HCT116 (cell line): ENCODE measurements at regions of chr15 and their contacts with region 1.

Region 1: DNA sequence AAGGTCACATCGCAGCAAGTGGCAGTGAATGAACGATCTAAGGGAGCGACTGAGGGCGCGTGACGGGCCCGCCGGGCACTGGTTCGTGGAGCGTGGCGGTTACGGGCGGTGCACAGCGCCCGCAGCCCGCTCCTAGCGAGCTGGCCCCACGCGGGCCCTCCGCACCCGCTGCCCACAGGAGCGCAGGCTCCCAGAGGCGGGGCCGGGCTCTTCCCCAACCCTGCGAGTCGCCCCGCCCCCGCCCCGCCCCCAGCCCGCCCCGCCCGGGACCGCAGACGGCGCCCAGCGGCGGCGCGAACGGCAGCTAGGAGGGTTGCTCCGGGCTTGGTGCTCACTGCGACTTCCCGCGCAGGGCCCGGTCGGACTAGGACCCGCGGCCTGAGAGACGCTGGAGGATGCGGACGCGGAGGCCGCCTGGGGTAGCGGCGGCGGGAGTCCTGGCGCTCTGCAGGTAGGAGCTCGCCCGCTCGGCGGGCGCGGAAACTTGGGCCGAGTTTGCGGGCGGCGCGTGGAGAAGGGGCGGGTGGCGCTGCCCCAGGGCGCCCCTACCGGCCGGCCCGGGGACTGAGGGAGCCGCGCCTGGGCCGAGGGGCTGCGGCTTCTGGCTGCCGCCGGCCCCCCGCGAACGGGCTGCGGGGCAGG is at the start of gene C15orf39:
- DNase-seq: peak; percentile 33
- ATAC-seq: peak; percentile 69
- H3K4me3 ChIP-seq: peak within 1 kb of the TSS; percentile 88
- H3K27ac ChIP-seq: peak within 1 kb of the TSS; percentile 95
- H3K4me1 ChIP-seq: peaks cover 32 to 56% of the 10 kb centered on the region in 2 experiments
- H3K27me3 ChIP-seq: no peaks in the 10 kb centered on the region
- CTCF ChIP-seq: peak in 2 of 3 experiments; percentile 70 to 73; a peak in 4 of 6 replicates
- POLR2A ChIP-seq: peak; percentile 93
- RAD21 ChIP-seq: no peak
- total RNA-seq, gene C15orf39: 29.3 TPM

Region 2: GRCh38 chr15:74565381-74566085 is 636.2 kb before region 1 on chr15:
- CTCF ChIA-PET with region 1: no interaction called
- POLR2A ChIA-PET with region 1: no interaction called
- RAD21 ChIA-PET with region 1: no interaction called
- intact Hi-C with region 1: no loop called
- DNase-seq: no peak
- ATAC-seq: no peak
- H3K4me3 ChIP-seq: no peak overlapping the region
- H3K27ac ChIP-seq: no peak overlapping the region
- H3K4me1 ChIP-seq: no peaks in the 10 kb centered on the region
- H3K27me3 ChIP-seq: no peaks in the 10 kb centered on the region
- CTCF ChIP-seq: no peak
- POLR2A ChIP-seq: no peak
- RAD21 ChIP-seq: no peak

Region 3: GRCh38 chr15:74787251-74788041 is 414.3 kb before region 1 on chr15:
- CTCF ChIA-PET with region 1: no interaction called
- POLR2A ChIA-PET with region 1: no interaction called
- RAD21 ChIA-PET with region 1: no interaction called
- intact Hi-C with region 1: loop called (anchors 10 kb)
- DNase-seq: no peak
- ATAC-seq: peak; percentile 69
- H3K4me3 ChIP-seq: no peak overlapping the region
- H3K27ac ChIP-seq: no peak overlapping the region; the same call in 1 of the 2 replicates
- H3K4me1 ChIP-seq: peaks cover 20 to 42% of the 10 kb centered on the region in 2 experiments
- H3K27me3 ChIP-seq: no peaks in the 10 kb centered on the region
- CTCF ChIP-seq: peak in 2 of 3 experiments; percentile 50 to 52; a peak in 4 of 6 replicates
- POLR2A ChIP-seq: no peak
- RAD21 ChIP-seq: no peak

Region 4: DNA sequence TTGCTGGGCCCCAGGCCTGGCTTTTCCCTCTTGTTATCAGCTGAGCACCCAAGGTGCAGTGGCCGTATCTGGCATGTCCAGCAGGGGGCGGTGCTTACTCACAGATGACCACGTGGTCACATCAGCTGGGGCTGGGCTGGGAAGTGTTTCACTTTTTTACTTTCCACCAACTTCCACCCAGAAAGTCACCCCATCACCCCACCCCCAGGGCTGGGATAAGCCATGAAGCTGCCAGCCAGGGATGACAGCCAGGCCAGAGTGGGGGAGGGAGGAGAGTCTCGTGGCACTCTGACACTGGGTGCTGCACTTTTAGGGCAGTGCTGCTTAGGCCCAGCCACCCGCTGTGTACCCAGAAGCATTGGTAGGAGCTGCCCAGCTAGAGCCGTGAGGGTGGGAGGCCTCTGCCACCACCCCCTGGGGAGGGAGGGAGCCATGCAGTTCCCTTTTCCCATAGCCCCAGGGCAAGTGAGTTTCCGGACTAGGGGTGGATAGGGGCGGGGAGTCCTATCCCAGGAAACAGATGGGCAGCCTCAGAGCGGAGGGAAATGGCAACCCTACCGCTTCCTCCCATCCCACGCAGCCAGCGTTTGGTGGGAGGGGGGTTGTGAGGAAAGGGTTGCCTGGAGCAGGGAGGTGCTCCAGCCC is 172.2 kb before region 1 on chr15:
- CTCF ChIA-PET with region 1: interaction called, 33 read pairs
- POLR2A ChIA-PET with region 1: interaction called, 8 read pairs
- RAD21 ChIA-PET with region 1: interaction called, 7 to 10 read pairs
- intact Hi-C with region 1: loop called (anchors 1 kb)
- DNase-seq: peak; percentile 51
- ATAC-seq: peak; percentile 89
- H3K4me3 ChIP-seq: no peak overlapping the region
- H3K27ac ChIP-seq: no peak overlapping the region; the same call in 1 of the 2 replicates
- H3K4me1 ChIP-seq: peaks cover 7 to 25% of the 10 kb centered on the region in 2 experiments; a peak in 3 of 4 replicates
- H3K27me3 ChIP-seq: no peaks in the 10 kb centered on the region
- CTCF ChIP-seq: peak; percentile 91 to 94 (median 94)
- POLR2A ChIP-seq: no peak
- RAD21 ChIP-seq: peak; percentile 97

Region 5: DNA sequence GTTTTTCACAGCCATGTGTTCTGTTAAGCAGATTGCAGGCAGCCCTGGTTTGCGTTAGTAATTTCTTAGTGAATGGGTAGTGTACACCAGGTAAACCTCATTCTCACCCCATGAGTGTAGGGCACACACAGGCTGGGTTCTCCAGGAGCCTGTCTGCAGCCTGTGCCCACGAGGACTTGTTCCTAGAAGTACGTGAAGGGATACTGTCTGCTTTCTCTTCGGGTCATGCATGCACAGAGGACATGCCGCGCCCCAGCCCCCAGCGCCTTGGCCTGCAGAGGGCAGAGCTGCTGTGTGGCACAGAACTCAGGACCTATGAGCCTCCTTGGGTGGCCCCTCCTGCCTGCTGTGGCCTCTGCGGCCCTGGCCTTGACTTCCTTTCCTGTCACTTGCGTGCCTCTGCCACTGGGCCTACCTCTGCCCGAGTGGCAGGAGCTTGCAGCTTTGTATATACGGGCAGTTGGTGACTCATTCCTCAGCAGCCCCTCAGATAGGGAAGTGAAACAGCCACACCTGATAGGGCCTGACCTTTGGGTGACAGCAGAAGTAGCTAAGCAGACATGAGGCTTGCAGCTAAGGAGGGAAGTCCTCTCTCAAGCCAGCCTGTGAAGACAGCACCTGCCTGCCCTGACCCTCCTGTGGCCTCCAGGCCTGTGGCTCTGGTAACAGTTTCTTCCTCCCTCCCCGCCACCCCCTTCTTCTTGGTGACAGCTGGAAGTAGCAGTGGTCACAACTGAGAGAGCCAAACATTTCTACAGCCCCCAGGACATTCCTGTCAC is 158.8 kb before region 1 on chr15:
- CTCF ChIA-PET with region 1: interaction called, 36 read pairs
- POLR2A ChIA-PET with region 1: interaction called, 24 read pairs
- RAD21 ChIA-PET with region 1: interaction called, 7 to 8 read pairs
- intact Hi-C with region 1: loop called (anchors 1 kb)
- DNase-seq: peak; percentile 43
- ATAC-seq: peak; percentile 87
- H3K4me3 ChIP-seq: no peak overlapping the region
- H3K27ac ChIP-seq: peak overlapping the region; percentile 28; the same call in 1 of the 2 replicates
- H3K4me1 ChIP-seq: peaks cover 31 to 50% of the 10 kb centered on the region in 2 experiments
- H3K27me3 ChIP-seq: no peaks in the 10 kb centered on the region
- CTCF ChIP-seq: peak; percentile 63 to 73 (median 73); a peak in 5 of 6 replicates
- POLR2A ChIP-seq: no peak
- RAD21 ChIP-seq: peak; percentile 89

Region 6: GRCh38 chr15:75145027-75145841 is 56.5 kb before region 1 on chr15:
- CTCF ChIA-PET with region 1: interaction called, 5 read pairs
- POLR2A ChIA-PET with region 1: no interaction called
- RAD21 ChIA-PET with region 1: no interaction called
- intact Hi-C with region 1: loop called (anchors 2 kb)
- DNase-seq: no peak
- ATAC-seq: peak; percentile 85
- H3K4me3 ChIP-seq: no peak overlapping the region
- H3K27ac ChIP-seq: no peak overlapping the region; the same call in 1 of the 2 replicates
- H3K4me1 ChIP-seq: peaks cover 9 to 21% of the 10 kb centered on the region in 2 experiments; a peak in 3 of 4 replicates
- H3K27me3 ChIP-seq: no peaks in the 10 kb centered on the region
- CTCF ChIP-seq: peak; percentile 16 to 82 (median 21); a peak in 3 of 6 replicates
- POLR2A ChIP-seq: no peak
- RAD21 ChIP-seq: peak; percentile 73